ENCODE measurements at regions of chr11 and their contacts with region 1.

Region 1: DNA sequence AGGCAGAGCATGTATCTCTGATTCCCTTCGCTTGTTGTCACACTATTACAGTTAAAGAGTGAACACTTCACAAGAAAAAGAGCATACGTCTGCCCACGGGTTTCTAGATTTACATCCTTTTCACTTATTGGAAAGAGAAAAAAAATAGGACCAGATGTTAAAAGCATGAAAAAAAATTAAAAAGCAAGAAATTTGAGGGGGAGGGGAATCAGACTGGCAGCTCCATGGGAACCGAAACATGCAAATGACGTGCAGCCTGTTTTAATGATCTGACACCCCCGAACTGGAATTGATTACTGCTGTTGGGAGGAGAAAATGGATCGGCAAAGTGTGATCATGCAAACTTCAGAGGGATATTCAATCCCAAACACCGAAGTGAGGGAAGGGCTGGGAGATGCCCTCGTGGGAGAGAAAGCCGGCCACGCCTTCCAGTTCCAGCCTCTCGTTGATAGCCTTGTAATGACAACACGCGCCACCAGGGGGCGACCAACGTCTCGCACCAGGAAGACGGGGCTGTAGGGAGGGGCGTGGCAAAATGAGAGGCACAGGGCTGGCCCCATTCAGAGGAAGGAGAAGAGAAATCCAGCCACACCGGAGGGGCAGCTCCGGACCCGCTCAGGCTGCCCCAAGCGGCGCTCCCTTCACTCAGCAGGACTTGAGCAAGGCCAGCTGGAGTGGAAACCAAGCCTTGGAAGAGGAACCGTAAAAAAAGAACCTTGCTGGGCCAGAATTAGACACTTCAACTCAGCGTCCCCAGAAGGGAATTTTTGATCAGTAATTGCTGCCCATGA is 53.8 kb upstream of the SYT13 start:
- DNase-seq: peak; percentile 97
- H3K4me3 ChIP-seq: peak overlapping the region; percentile 13 to 66 (median 22)
- H3K27ac ChIP-seq: peak overlapping the region in 6 of 8 donors; percentile 8 to 68 (median 42)
- H3K4me1 ChIP-seq: peaks cover 0 to 18% (median 14%) of the 10 kb centered on the region in 6 donors
- H3K27me3 ChIP-seq: peaks cover 0 to 21% (median 0%) of the 10 kb centered on the region in 7 donors
- CTCF ChIP-seq: peak; percentile 87 to 97 (median 95)
- POLR2A ChIP-seq: no peak

Region 2: GRCh38 chr11:44927174-44927661 is 412.7 kb before region 1 on chr11:
- intact Hi-C with region 1: loop called (anchors 10 kb)
- DNase-seq: peak; percentile 90
- H3K4me3 ChIP-seq: no peak overlapping the region
- H3K27ac ChIP-seq: no peak overlapping the region
- H3K4me1 ChIP-seq: peaks cover 0 to 10% (median 7%) of the 10 kb centered on the region in 6 donors
- H3K27me3 ChIP-seq: no peaks in the 10 kb centered on the region
- CTCF ChIP-seq: peak; percentile 59 to 92 (median 84)
- POLR2A ChIP-seq: no peak

Region 3: GRCh38 chr11:45655347-45655756 is 315.4 kb after region 1 on chr11:
- intact Hi-C with region 1: loop called (anchors 10 kb)
- DNase-seq: peak; percentile 88
- H3K4me3 ChIP-seq: no peak overlapping the region
- H3K27ac ChIP-seq: peak overlapping the region in 1 of 8 donors; percentile 2
- H3K4me1 ChIP-seq: peaks cover 11 to 48% (median 29%) of the 10 kb centered on the region in 6 donors
- H3K27me3 ChIP-seq: peaks cover 0 to 73% (median 8%) of the 10 kb centered on the region in 7 donors
- CTCF ChIP-seq: peak; percentile 42 to 95 (median 81)
- POLR2A ChIP-seq: no peak

Region 4: DNA sequence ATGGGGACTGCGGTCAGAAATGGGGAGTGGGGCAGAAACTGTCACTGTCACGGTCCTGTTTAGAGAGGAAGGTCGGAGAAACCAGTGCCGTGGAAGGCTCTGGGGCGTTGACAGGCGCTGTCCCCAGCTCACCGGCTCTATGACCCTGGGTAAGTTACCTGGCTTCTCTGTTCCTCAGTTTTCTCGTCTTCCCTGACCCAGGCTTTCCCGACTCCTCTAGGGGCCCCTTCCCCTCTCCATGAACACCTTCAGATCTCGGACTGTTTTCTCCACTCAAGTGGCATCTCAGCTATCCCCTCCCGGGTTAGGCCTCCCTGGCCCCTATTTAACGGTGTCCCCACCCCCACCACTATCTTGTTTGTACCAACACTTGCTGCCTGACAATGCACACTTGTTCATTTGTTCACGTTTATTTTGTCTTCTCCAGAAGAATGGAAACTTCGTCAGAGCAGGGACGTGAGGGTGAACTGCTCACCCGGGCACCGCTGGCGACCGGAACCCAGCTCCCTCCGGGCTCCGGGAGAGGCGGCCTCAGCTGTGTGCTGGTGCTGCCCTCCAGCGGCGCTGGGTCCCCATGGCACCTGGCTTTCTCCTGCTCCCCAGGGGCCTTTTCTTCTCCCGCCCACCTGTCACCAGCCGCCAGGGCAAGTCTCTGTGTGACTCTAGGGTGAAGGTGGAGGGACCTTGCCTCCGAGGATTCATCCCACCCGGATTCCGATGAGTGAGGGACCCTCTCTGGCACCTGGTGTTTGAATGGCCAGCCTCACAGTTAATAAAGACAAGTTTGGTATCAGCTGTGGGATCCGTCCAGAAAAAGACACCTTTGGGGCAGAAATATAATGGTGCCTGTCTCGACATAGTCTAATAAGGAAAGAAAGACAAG is 431.9 kb after region 1 on chr11:
- intact Hi-C with region 1: loop called (anchors 10 kb)
- DNase-seq: peak; percentile 94
- H3K4me3 ChIP-seq: peak overlapping the region; percentile 45 to 85 (median 56)
- H3K27ac ChIP-seq: peak overlapping the region in 7 of 8 donors; percentile 52 to 74 (median 69)
- H3K4me1 ChIP-seq: peaks cover 4 to 28% (median 18%) of the 10 kb centered on the region in 6 donors
- H3K27me3 ChIP-seq: peaks cover 0 to 5% (median 0%) of the 10 kb centered on the region in 7 donors
- CTCF ChIP-seq: peak; percentile 65 to 94 (median 90)
- POLR2A ChIP-seq: no peak

Measured in spleen (tissue), 13 donors.